ENCODE measurements at regions of chr5 and their contacts with region 1.

Region 1: DNA sequence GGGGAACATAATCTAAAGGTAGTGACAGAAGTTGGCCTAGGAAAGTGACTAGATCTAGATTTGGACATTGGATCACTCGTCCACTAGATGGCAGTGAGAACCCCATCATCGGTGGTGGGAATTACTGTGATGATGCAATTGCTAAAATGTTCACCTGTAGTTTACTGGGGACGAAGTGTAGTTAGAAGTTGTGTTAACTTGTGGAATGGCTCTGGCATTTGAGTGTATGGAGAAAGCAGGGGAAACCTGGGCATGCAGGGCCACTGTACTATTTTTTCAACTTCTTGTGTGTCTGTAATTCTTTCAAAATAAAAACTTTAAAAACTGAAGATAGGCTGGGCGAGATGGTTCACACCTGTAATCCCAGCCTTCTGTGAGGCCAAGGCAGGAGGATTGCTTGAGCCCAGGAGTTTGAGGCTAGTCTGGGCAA is 75.5 kb downstream of the PHAX start:
- DNase-seq: peak; percentile 10 to 78 (median 68)
- ATAC-seq: peak; percentile 87
- H3K4me3 ChIP-seq: no peak overlapping the region
- H3K4me3 Mint-ChIP-seq: peak overlapping the region in 1 of 10 donors; percentile 43
- H3K27ac ChIP-seq: no peak overlapping the region
- H3K27ac Mint-ChIP-seq: peak overlapping the region in 4 of 9 donors; percentile 0 to 50 (median 1)
- H3K4me1 ChIP-seq: no peaks in the 10 kb centered on the region
- H3K4me1 Mint-ChIP-seq: peaks cover 4 to 19% (median 5%) of the 10 kb centered on the region in 7 donors
- H3K27me3 ChIP-seq: no peaks in the 10 kb centered on the region
- H3K27me3 Mint-ChIP-seq: no peaks in the 10 kb centered on the region

Region 2: DNA sequence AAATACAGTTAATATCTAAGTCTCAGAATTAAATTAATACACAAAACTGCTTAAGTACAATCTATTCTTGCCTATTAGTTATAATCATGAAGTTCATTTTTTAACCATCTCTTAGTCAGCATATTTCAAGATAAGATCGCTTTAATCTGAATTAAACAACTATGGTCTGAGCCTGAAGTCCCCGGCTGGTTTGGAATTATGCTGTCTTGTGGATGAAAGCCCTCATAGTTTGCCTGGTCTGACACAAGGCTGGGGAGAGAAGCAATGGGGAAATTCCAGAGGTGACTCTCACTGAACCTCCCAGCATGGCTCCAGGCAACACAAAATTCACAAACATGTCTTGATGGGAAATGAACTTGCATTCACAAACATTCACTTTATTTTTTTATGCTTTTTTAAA is 281.0 kb before region 1 on chr5:
- CTCF ChIA-PET with region 1: no interaction called
- POLR2A ChIA-PET with region 1: no interaction called
- intact Hi-C with region 1: no loop called
- DNase-seq: no peak
- ATAC-seq: no peak
- H3K4me3 ChIP-seq: no peak overlapping the region
- H3K4me3 Mint-ChIP-seq: no peak overlapping the region
- H3K27ac ChIP-seq: no peak overlapping the region
- H3K27ac Mint-ChIP-seq: no peak overlapping the region
- H3K4me1 ChIP-seq: no peaks in the 10 kb centered on the region
- H3K4me1 Mint-ChIP-seq: no peaks in the 10 kb centered on the region
- H3K27me3 ChIP-seq: no peaks in the 10 kb centered on the region
- H3K27me3 Mint-ChIP-seq: peaks cover 0 to 3% (median 0%) of the 10 kb centered on the region in 5 donors

Region 3: DNA sequence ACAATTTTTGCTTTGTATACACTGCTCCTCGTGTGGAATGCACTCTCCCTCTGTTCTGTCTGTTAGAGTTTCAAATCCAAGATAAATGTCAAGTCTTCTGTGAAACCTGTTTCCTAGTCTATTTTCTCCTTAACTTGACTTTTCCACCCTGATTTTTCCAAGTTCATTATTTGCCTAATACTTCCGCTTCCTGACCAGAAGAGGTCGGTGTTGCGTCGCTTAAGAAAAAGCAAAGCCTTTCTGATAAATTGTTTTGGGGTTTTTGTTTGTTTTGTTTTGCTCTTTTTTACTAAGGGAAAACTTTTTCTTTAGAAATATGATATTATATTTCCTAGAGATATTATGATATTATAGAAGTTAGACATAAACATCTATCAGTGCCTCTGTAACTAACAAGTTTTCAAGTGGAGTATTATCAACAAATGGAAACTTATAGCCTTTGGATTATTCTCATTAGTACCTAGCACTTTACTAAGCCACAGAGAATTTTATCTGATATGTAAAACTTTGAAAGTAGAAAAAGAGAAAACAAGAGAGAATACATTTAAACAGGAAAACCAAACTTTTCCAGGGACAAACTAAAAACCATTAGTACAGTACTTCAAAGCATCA is 19.7 kb before region 1 on chr5:
- CTCF ChIA-PET with region 1: interaction called, 11 read pairs
- POLR2A ChIA-PET with region 1: no interaction called
- intact Hi-C with region 1: loop called in 1 of 2 experiments (anchors 1 kb)
- DNase-seq: peak in 5 of 9 donors; percentile 13 to 27 (median 24)
- ATAC-seq: no peak
- H3K4me3 ChIP-seq: no peak overlapping the region
- H3K4me3 Mint-ChIP-seq: no peak overlapping the region
- H3K27ac ChIP-seq: no peak overlapping the region
- H3K27ac Mint-ChIP-seq: no peak overlapping the region
- H3K4me1 ChIP-seq: no peaks in the 10 kb centered on the region
- H3K4me1 Mint-ChIP-seq: peaks cover 0 to 8% (median 0%) of the 10 kb centered on the region in 7 donors
- H3K27me3 ChIP-seq: no peaks in the 10 kb centered on the region
- H3K27me3 Mint-ChIP-seq: peaks cover 0 to 9% (median 0%) of the 10 kb centered on the region in 5 donors

Region 4: GRCh38 chr5:126801992-126802294 is 125.7 kb after region 1 on chr5:
- CTCF ChIA-PET with region 1: interaction called, 4 read pairs
- POLR2A ChIA-PET with region 1: no interaction called
- intact Hi-C with region 1: loop called (anchors 1 kb)
- DNase-seq: peak in 3 of 9 donors; percentile 5 to 33 (median 32)
- ATAC-seq: peak; percentile 61
- H3K4me3 ChIP-seq: no peak overlapping the region
- H3K4me3 Mint-ChIP-seq: no peak overlapping the region
- H3K27ac ChIP-seq: no peak overlapping the region
- H3K27ac Mint-ChIP-seq: peak overlapping the region in 2 of 9 donors; percentile 24 to 28
- H3K4me1 ChIP-seq: peaks cover 5 to 7% of the 10 kb centered on the region in 2 donors
- H3K4me1 Mint-ChIP-seq: peaks cover 18 to 58% (median 27%) of the 10 kb centered on the region in 7 donors
- H3K27me3 ChIP-seq: no peaks in the 10 kb centered on the region
- H3K27me3 Mint-ChIP-seq: no peaks in the 10 kb centered on the region

Region 5: DNA sequence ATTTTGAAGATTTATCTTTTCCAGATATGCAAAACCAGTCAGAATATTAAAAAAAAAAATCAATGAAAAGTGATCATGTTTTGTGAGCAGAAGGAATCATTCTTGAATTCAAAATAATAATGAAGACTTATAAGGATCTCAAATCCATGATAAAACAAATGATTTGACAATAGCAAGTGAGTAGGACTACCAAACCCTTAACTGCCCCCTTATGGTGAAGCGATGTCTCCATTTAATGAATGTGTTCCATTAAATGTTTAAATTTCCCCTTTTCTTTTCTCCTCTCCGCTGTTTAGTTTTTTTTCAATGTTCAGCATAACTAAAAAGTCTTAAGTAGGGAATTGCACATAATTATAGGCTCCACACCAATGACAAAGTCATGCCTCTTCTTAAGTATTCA is 366.4 kb after region 1 on chr5:
- CTCF ChIA-PET with region 1: no interaction called
- POLR2A ChIA-PET with region 1: no interaction called
- intact Hi-C with region 1: loop called in 1 of 2 experiments (anchors 1 kb)
- DNase-seq: peak in 1 of 9 donors; percentile 13
- ATAC-seq: no peak
- H3K4me3 ChIP-seq: no peak overlapping the region
- H3K4me3 Mint-ChIP-seq: no peak overlapping the region
- H3K27ac ChIP-seq: no peak overlapping the region
- H3K27ac Mint-ChIP-seq: peak overlapping the region in 1 of 9 donors; percentile 54
- H3K4me1 ChIP-seq: no peaks in the 10 kb centered on the region
- H3K4me1 Mint-ChIP-seq: peaks cover 0 to 1% (median 0%) of the 10 kb centered on the region in 7 donors
- H3K27me3 ChIP-seq: no peaks in the 10 kb centered on the region
- H3K27me3 Mint-ChIP-seq: no peaks in the 10 kb centered on the region

Region 6: DNA sequence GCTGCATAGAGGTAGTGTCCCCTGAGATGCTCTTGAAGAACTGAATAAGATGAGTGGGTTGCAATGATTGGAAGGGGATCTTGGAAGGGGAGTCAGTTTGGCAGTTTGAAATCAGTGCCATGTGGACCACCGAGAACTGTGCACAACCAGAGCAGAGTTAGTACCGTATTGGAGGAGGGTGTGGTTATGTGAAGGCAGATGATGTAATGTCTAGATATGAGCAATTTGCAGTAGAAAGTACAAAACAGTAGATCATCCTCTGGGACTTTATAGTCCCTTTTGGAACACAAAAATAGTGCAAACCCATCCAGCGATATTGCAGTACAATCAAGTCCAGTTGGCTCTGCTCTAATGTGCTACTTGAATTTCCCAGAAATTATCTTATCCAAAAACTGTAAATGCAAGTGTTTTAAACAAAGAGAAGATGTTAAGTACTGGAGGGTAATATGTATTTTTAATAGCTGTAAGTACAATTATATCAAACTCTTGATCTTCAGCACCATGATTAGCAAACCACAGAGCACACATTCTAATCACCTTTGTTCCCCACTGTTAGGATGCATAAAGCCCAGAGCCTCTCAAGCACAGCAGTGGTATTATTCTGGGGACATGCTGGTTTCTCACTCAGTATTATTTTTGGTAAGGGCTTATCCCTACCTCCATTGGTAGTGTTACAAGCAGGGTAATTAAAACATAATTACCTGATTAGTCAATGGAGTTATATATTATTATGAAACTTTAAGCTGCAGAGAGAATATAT is 655.9 kb after region 1 on chr5:
- CTCF ChIA-PET with region 1: no interaction called
- POLR2A ChIA-PET with region 1: no interaction called
- intact Hi-C with region 1: no loop called
- DNase-seq: no peak
- ATAC-seq: no peak
- H3K4me3 ChIP-seq: no peak overlapping the region
- H3K4me3 Mint-ChIP-seq: no peak overlapping the region
- H3K27ac ChIP-seq: no peak overlapping the region
- H3K27ac Mint-ChIP-seq: no peak overlapping the region
- H3K4me1 ChIP-seq: no peaks in the 10 kb centered on the region
- H3K4me1 Mint-ChIP-seq: no peaks in the 10 kb centered on the region
- H3K27me3 ChIP-seq: no peaks in the 10 kb centered on the region
- H3K27me3 Mint-ChIP-seq: peaks cover 29 to 39% (median 33%) of the 10 kb centered on the region in 5 donors

Region 7: GRCh38 chr5:127441799-127442484 is 765.7 kb after region 1 on chr5:
- CTCF ChIA-PET with region 1: no interaction called
- POLR2A ChIA-PET with region 1: no interaction called
- intact Hi-C with region 1: loop called in 1 of 2 experiments (anchors 5 kb)
- DNase-seq: no peak
- ATAC-seq: no peak
- H3K4me3 ChIP-seq: no peak overlapping the region
- H3K4me3 Mint-ChIP-seq: no peak overlapping the region
- H3K27ac ChIP-seq: no peak overlapping the region
- H3K27ac Mint-ChIP-seq: no peak overlapping the region
- H3K4me1 ChIP-seq: no peaks in the 10 kb centered on the region
- H3K4me1 Mint-ChIP-seq: no peaks in the 10 kb centered on the region
- H3K27me3 ChIP-seq: no peaks in the 10 kb centered on the region
- H3K27me3 Mint-ChIP-seq: peaks cover 0 to 24% (median 8%) of the 10 kb centered on the region in 5 donors

Measured in naive thymus-derived CD4-positive, alpha-beta T cell (primary cell).